K562 (cell line): ENCODE measurements at regions of chr13 and their contacts with region 1.

Region 1: DNA sequence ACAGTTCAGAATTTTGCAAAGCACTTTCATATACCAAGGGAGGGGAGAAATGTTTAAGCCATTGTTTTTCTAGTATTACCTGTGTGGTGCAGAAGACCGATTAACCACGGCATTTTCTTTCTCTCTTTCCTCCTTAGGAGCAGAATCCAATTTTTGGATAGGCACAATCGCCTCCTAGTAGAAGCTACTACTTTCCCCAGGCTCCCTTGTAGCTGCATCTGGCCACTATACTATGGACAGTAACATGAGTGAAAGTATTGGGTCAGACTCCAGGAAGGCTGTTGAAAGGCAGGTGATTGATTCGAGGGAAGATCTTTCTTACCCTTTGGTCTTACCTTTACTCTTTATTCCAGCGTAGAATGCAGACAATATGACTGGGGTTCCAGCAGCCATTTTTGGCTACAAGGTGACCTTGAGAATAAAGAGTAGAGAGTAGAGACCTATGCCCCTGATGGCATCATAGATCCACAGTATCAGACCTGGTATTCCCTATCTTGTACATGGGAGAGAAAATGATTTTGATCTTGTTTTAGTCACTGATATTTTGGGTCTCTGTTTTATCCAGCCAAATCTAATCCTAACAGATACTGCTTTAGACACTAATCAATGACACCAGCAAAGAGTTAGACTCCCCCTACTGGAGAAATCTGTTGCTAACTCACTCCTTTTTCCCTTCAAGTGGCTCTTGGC is 77.0 kb downstream of the LRRC63 start:
- DNase-seq: peak; percentile 26 to 63 (median 38)
- ATAC-seq: peak; percentile 72
- H3K4me3 ChIP-seq: no peak overlapping the region
- H3K27ac ChIP-seq: no peak overlapping the region
- H3K4me1 ChIP-seq: peaks cover 2 to 15% of the 10 kb centered on the region in 2 experiments; a peak in 3 of 5 replicates
- H3K27me3 ChIP-seq: no peaks in the 10 kb centered on the region
- CTCF ChIP-seq: peak; percentile 52 to 67 (median 65); a peak in 5 of 6 replicates
- EP300 ChIP-seq: no peak
- POLR2A ChIP-seq: no peak
- RAD21 ChIP-seq: peak; percentile 41 to 76; a peak in 2 of 4 replicates

Region 2: GRCh38 chr13:46160471-46161066 is 128.1 kb before region 1 on chr13:
- CTCF ChIA-PET with region 1: interaction called, 6 read pairs
- POLR2A ChIA-PET with region 1: no interaction called
- in situ Hi-C with region 1: loop called (anchors 10 kb)
- intact Hi-C with region 1: loop called (anchors 1 kb)
- DNase-seq: peak; percentile 24 to 74 (median 44)
- ATAC-seq: peak; percentile 81
- H3K4me3 ChIP-seq: no peak overlapping the region
- H3K27ac ChIP-seq: no peak overlapping the region
- H3K4me1 ChIP-seq: peaks cover 0 to 5% of the 10 kb centered on the region in 2 experiments; a peak in 2 of 5 replicates
- H3K27me3 ChIP-seq: no peaks in the 10 kb centered on the region
- CTCF ChIP-seq: peak; percentile 57 to 68 (median 67)
- EP300 ChIP-seq: no peak
- POLR2A ChIP-seq: no peak
- RAD21 ChIP-seq: peak; percentile 43 to 56